WTC11 (cell line): ENCODE measurements at regions of chr7 and their contacts with region 1.

Region 1: DNA sequence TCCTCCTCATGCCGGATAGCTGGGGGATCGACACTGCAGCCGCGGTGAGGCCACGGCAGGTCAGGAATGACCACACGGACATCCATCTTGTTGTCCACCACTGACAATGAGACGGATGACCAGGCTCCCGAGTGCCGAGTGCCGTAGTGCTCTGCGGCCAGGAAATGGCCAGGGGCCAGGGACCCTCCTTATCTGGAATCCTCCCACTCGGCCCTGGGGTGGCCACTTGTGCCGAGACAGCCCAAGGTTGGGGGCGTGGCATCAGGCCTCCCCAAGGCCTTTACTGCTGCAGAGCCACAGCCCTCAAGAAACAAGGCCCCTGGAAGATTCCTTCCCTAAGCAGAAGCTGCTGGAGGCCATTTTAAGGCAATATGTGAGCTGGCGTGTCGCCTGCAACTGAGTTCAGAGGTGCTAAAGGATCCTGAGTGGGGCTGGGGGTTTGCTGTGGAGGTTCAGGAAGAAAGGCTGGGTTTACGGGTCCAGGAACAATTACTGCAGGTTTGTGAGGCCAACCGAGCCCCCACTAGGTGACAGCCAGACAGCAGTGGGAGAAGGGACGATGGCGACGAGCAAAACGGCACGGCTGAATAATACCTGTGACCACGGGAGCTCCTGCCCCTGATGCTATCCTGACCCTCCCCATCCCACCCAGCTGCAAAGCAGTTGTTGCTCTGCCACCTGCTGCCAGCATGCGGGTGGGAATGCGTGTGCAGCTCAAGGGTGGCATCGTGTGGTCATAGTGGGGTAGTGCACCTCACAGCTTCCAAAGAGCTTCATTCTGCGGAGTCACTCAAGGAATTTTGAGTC is 31.6 kb upstream of the LEP start:
- DNase-seq: peak; percentile 76
- ATAC-seq: peak; percentile 55
- H3K4me3 Mint-ChIP-seq: no peak overlapping the region
- H3K27ac Mint-ChIP-seq: no peak overlapping the region
- H3K4me1 Mint-ChIP-seq: peaks cover 25% of the 10 kb centered on the region
- H3K27me3 Mint-ChIP-seq: peaks cover 23% of the 10 kb centered on the region
- CTCF ChIP-seq: peak; percentile 95

Region 2: DNA sequence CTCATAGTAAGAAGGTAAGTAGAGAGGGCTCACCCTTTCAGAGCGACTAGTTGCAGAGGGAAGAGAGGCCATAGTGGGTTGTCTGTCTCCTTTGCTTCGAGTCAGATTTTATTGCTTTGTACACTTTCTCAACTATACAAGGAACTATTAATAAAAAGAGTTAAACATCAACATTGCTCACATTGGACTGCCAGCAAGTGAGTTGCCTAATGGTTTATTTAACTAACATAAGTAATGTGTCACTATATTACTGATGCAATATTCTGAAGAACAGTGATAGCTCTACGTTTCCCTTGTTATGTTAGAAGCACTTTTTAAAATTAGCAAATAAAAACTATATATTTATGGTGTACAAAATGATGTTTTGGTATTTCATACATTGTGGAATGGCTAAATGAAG is 1407.7 kb before region 1 on chr7:
- CTCF ChIA-PET with region 1: no interaction called
- POLR2A ChIA-PET with region 1: no interaction called
- DNase-seq: no peak
- ATAC-seq: no peak
- H3K4me3 Mint-ChIP-seq: no peak overlapping the region
- H3K27ac Mint-ChIP-seq: no peak overlapping the region
- H3K4me1 Mint-ChIP-seq: peaks cover 11% of the 10 kb centered on the region
- H3K27me3 Mint-ChIP-seq: no peaks in the 10 kb centered on the region
- CTCF ChIP-seq: no peak

Region 3: DNA sequence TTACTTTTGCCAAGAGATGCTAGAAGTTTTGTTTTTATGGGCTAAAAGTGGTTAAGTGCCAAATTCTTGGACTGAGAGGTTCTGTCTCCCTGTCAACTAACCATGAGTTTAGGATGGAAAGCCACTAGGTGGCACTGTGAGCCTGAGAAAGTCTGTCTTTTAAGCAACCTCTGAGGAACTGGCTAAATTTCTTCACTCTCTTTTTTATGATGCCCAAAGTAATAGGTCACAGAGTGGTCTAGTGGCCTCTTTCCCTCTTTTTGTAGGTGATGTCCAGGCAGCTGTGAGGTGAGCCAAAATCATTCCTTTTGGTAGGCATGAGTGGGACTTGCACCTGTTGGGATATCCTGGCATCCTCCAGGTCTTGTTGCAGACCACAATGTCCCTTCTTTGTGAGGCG is 500.6 kb before region 1 on chr7:
- CTCF ChIA-PET with region 1: interaction called, 16 read pairs
- POLR2A ChIA-PET with region 1: no interaction called
- DNase-seq: peak; percentile 76
- ATAC-seq: peak; percentile 84
- H3K4me3 Mint-ChIP-seq: no peak overlapping the region
- H3K27ac Mint-ChIP-seq: no peak overlapping the region
- H3K4me1 Mint-ChIP-seq: peaks cover 2% of the 10 kb centered on the region; the same call in 1 of the 2 replicates
- H3K27me3 Mint-ChIP-seq: no peaks in the 10 kb centered on the region; the same call in 1 of the 2 replicates
- CTCF ChIP-seq: peak; percentile 65

Region 4: DNA sequence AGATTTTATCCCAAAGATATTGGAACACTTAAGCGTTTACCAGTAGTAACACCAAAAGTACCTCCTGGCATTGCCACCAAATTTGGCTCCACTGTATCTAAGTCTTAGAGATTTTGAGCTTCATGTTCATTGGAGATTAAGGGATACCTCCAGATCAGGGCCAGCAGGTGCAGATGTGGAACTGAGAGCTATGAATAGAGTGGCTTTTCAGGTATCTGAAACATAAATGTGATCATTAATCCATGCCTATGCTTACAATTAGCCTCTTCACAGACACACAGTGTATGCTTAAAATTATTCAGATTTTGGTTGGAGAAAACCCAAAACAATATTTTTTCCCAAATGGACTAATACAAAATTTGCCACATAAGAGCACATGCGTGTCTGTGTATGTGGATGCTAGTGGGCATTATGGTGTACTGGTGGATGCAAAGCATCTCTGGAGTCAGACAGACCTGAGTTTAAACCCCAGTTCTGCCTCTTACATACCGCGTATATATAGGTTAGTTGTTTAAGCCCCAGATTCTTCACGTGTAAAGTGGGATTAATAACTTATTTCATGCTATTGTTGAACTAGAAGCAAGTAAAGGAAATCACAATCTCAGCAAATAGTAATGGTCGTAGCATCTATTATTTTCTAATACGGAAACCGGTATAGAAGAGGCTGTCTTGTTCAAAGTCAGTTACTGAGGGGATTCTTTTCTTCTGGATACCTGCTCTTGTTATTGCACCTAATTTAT is 171.4 kb before region 1 on chr7:
- CTCF ChIA-PET with region 1: interaction called, 58 read pairs
- POLR2A ChIA-PET with region 1: interaction called, 3 read pairs
- DNase-seq: no peak
- ATAC-seq: no peak
- H3K4me3 Mint-ChIP-seq: no peak overlapping the region
- H3K27ac Mint-ChIP-seq: no peak overlapping the region
- H3K4me1 Mint-ChIP-seq: peaks cover 12% of the 10 kb centered on the region
- H3K27me3 Mint-ChIP-seq: peaks cover 10% of the 10 kb centered on the region
- CTCF ChIP-seq: no peak

Region 5: DNA sequence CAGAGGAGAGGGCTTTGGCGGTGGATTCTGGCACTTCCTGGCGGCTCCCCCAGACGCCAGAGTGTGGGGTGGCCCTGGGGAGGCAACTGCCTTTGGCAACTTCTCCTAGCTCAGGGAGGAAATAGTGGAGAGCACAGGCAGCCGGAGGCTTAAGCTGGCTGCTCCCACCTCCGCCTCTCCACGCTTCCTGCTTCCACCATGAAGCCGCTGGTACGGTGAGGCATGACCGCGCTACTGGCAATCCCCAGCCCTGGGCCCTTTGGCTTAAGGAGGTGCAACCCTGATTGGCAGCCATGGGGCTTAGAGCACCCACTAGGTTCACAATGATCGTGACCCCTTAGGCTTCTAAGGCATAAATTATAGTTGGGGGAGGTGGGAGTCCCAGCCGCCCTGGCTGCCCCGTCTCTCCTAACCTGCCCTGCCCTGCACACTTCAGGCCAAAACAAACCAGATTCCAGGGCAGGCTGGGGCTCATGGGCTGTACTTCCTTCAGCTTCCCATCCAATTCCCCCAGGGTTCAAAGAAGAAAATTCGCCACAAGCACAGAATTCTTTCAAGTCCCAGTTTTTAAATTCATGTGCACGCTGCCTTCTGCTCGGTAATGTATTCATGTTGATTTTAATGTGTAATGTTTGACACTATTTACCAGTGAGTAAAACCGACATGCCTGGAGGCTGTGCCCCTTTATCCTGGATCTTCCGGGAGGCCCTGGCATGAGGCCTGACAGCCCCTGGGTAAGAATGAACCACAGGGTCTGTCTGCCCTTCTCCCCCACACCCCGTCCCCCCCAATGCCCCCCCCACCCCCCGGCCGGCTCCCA is 87.5 kb before region 1 on chr7:
- CTCF ChIA-PET with region 1: interaction called, 25 read pairs
- POLR2A ChIA-PET with region 1: no interaction called
- DNase-seq: no peak
- ATAC-seq: peak; percentile 56
- H3K4me3 Mint-ChIP-seq: no peak overlapping the region
- H3K27ac Mint-ChIP-seq: no peak overlapping the region
- H3K4me1 Mint-ChIP-seq: peaks cover 23% of the 10 kb centered on the region
- H3K27me3 Mint-ChIP-seq: peaks cover 3% of the 10 kb centered on the region
- CTCF ChIP-seq: no peak

Region 6: DNA sequence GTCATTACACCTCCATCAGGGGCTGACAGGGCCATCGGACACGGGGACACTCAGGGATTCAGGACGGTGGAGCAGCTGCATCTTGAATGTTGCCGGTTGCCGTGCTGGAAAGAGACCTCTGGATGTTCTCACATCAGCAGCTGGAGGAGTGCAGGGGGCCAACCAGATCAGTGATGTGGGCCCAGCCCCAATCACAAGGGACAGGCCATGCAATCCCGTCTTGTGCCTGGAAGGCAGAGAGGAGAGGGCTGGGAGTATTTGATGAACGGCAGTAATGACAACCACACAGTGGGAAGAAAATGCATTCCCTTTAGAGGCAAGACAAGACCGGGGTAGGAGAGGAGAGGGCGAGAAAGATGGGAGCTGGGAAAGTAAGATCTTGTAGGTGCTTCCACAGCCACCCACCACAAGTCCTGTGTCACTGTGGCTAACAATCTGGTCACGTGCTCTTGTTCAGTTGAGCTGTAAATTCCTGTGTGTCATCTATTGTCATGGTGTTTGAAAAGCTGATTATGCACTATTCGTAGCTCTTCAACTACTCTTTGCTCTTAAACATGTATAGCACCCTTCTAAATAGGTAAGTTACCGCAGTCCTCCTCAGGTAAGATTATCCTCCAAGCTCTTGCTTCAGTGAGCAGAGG is 54.2 kb before region 1 on chr7:
- CTCF ChIA-PET with region 1: interaction called, 40 read pairs
- POLR2A ChIA-PET with region 1: no interaction called
- DNase-seq: no peak
- ATAC-seq: peak; percentile 70
- H3K4me3 Mint-ChIP-seq: no peak overlapping the region
- H3K27ac Mint-ChIP-seq: no peak overlapping the region
- H3K4me1 Mint-ChIP-seq: peaks cover 22% of the 10 kb centered on the region
- H3K27me3 Mint-ChIP-seq: peaks cover 29% of the 10 kb centered on the region
- CTCF ChIP-seq: no peak

Region 7: DNA sequence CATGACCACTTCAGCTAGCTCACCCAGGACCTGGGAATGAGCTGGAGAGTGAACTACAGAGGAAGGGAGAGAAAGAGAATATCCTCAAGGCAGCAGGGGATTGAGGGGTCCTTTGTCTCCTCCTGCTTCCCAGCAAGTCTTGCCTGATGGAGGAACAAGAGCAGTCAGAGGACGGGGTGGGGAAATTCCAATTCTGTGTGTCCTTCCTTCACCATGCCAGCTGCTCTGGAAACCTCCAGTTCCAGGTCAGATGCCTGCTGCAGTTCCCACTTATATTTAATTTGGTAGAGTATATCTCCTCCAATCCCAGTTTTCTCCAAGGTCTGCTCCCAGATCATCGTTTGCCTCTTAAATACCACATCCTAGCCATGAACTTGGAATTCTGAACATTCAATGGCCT is 10.2 kb after region 1 on chr7:
- CTCF ChIA-PET with region 1: interaction called, 10 read pairs
- POLR2A ChIA-PET with region 1: no interaction called
- DNase-seq: no peak
- ATAC-seq: no peak
- H3K4me3 Mint-ChIP-seq: no peak overlapping the region
- H3K27ac Mint-ChIP-seq: no peak overlapping the region
- H3K4me1 Mint-ChIP-seq: peaks cover 8% of the 10 kb centered on the region
- H3K27me3 Mint-ChIP-seq: peaks cover 46% of the 10 kb centered on the region
- CTCF ChIP-seq: no peak

Region 8: DNA sequence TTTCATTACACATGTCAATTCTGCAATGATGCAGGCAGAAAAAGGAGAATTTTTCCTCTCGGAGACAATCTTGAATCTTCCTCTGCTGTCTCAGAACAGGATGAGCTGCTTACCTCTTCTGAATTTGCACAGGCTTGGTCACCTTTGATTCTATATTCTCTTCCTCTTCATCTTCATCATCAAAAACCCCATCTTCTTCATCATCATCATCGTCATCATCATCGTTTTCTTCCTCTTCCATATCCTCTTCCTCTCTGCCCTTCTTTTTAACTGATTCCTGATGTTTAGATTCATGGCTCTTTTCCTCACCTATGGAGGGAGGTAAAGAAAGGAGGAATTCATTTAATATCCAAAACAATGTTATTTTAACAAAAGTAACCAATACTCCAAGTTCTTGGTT is 126.3 kb after region 1 on chr7:
- CTCF ChIA-PET with region 1: no interaction called
- POLR2A ChIA-PET with region 1: no interaction called
- DNase-seq: no peak
- ATAC-seq: no peak
- H3K4me3 Mint-ChIP-seq: no peak overlapping the region
- H3K27ac Mint-ChIP-seq: no peak overlapping the region
- H3K4me1 Mint-ChIP-seq: no peaks in the 10 kb centered on the region
- H3K27me3 Mint-ChIP-seq: no peaks in the 10 kb centered on the region
- CTCF ChIP-seq: no peak

Region 9: DNA sequence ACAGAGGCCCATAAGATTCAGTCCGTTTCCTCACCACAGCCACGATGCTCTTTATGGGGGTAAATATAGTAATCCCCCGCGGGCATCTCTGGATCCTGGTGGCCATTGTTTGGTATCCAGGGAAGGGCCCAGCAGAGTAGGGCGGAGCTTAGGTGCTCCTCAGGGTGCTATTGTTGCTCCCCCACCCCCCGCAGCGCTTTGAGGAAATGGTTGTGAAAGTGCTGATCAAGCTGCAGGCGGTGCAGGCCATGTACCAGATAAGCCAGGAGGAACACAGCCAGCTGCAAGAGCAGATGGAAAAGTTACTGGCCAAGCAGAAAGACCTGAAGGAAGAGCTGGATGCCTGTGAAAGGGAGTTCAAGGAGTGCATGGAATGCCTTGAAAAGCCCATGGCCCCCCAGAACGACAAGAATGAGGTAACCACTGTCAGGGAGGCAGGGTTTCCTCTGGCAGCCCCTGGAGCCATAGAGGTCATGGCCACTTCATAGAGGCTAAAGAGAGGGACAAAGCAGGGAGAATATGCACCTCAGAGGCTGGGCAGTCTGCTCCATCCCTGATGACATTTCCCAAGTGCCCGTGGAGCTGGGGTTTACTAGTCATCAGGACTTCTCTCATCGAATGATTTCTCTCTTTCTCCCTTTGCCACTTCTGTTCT is 603.2 kb after region 1 on chr7:
- CTCF ChIA-PET with region 1: no interaction called
- POLR2A ChIA-PET with region 1: no interaction called
- DNase-seq: no peak
- ATAC-seq: peak; percentile 34
- H3K4me3 Mint-ChIP-seq: no peak overlapping the region
- H3K27ac Mint-ChIP-seq: no peak overlapping the region
- H3K4me1 Mint-ChIP-seq: no peaks in the 10 kb centered on the region
- H3K27me3 Mint-ChIP-seq: no peaks in the 10 kb centered on the region
- CTCF ChIP-seq: no peak